WTC11 (cell line): ENCODE measurements at regions of chr20 and their contacts with region 1.

Region 1: DNA sequence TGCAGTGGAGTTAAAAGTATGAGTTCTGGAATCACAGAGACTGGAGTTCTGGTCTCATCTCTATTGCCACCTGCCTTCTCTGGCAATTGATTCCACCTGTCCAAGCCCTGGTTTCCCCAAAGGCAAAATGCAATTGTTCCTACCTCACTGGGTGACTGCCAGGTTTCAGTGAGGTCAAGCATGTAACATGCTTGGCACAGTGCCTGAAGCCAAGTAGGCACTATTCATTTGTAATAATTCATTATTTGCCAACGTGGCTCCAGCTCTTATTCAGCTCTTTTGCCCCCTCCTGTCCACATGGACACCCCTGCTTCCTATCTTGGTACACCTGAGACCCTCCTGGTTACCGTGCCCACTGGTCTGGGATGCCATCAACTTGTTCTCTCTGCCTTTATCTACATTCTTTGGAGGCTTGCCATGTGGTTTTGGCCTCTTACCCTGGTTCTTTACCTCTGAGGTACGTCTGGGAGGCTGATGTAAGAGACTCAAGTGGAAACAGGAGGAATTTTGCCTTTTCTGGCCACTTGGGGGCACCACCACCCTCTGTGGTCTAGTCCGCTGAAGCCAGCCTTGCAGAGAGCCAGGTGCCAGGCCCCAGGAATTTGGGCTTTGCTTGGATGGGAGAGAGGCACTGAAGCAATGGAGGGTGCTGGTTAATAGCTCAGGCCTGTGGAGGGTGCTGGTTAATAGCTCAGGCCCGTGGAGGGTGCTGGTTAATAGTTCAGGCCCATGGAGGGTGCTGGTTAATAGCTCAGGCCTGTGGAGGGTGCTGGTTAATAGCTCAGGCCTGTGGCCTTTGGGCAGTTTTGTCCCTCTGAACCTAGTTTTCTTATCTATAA is 1.7 kb downstream of the KCNK15 start:
- DNase-seq: peak; percentile 95
- ATAC-seq: peak; percentile 73
- H3K4me3 Mint-ChIP-seq: peak overlapping the region; percentile 75
- H3K27ac Mint-ChIP-seq: no peak overlapping the region
- H3K4me1 Mint-ChIP-seq: peaks cover 15% of the 10 kb centered on the region
- H3K27me3 Mint-ChIP-seq: peaks cover 47% of the 10 kb centered on the region
- CTCF ChIP-seq: peak; percentile 76

Region 2: GRCh38 chr20:44642203-44643153 is 104.9 kb before region 1 on chr20:
- CTCF ChIA-PET with region 1: no interaction called
- POLR2A ChIA-PET with region 1: no interaction called
- DNase-seq: peak; percentile 45
- ATAC-seq: peak; percentile 67
- H3K4me3 Mint-ChIP-seq: peak overlapping the region; percentile 0; the same call in 1 of the 2 replicates
- H3K27ac Mint-ChIP-seq: peak overlapping the region; percentile 70
- H3K4me1 Mint-ChIP-seq: peaks cover 57% of the 10 kb centered on the region
- H3K27me3 Mint-ChIP-seq: no peaks in the 10 kb centered on the region
- CTCF ChIP-seq: no peak

Region 3: DNA sequence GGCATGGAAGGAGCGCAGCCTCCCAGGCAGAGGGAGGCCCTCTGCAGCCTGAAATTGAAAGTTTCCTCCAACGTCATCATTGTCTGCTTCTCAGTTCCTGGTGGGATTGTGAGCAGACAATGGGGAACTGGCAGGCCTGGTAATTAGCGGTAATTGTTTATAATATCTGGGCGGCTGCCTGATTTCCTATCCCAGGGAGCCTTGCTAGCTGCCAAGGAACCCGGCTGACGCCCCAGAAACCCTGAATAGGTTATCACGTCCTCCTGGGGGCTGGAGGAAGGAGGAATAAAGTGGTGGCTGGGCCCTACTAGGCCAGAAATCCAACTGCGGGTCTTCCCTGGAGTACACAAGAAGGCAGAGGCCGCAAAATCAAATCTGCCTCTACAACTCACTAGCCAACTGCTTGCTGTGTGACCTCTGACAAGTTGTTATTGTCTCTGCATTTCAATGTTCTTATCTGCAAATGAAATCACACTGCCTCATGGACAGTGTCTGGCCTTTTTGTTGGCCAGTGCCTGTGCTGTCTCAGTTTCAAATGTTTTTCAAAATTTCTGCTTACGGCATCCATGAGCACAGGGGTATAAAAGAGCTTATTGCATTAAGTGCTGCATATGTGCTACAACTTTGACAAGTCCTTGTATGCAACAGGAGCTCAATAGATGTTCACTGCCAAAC is 15.2 kb after region 1 on chr20:
- CTCF ChIA-PET with region 1: interaction called, 18 read pairs
- POLR2A ChIA-PET with region 1: no interaction called
- DNase-seq: no peak
- ATAC-seq: no peak
- H3K4me3 Mint-ChIP-seq: no peak overlapping the region
- H3K27ac Mint-ChIP-seq: no peak overlapping the region
- H3K4me1 Mint-ChIP-seq: peaks cover 7% of the 10 kb centered on the region; the same call in 1 of the 2 replicates
- H3K27me3 Mint-ChIP-seq: no peaks in the 10 kb centered on the region
- CTCF ChIP-seq: no peak

Region 4: GRCh38 chr20:44776977-44777376 is 29.6 kb after region 1 on chr20:
- CTCF ChIA-PET with region 1: interaction called, 14 read pairs
- POLR2A ChIA-PET with region 1: no interaction called
- DNase-seq: peak; percentile 69
- ATAC-seq: peak; percentile 20; the same call in 1 of the 2 replicates
- H3K4me3 Mint-ChIP-seq: no peak overlapping the region
- H3K27ac Mint-ChIP-seq: no peak overlapping the region
- H3K4me1 Mint-ChIP-seq: no peaks in the 10 kb centered on the region
- H3K27me3 Mint-ChIP-seq: no peaks in the 10 kb centered on the region
- CTCF ChIP-seq: no peak

Region 5: GRCh38 chr20:44800398-44801046 is 53.1 kb after region 1 on chr20:
- CTCF ChIA-PET with region 1: interaction called, 15 read pairs
- POLR2A ChIA-PET with region 1: no interaction called
- DNase-seq: peak; percentile 63
- ATAC-seq: peak; percentile 74
- H3K4me3 Mint-ChIP-seq: no peak overlapping the region
- H3K27ac Mint-ChIP-seq: no peak overlapping the region
- H3K4me1 Mint-ChIP-seq: peaks cover 17% of the 10 kb centered on the region
- H3K27me3 Mint-ChIP-seq: no peaks in the 10 kb centered on the region
- CTCF ChIP-seq: no peak; the same call in 1 of the 2 replicates

Region 6: GRCh38 chr20:44866703-44867335 is 119.4 kb after region 1 on chr20:
- CTCF ChIA-PET with region 1: interaction called, 15 read pairs
- POLR2A ChIA-PET with region 1: no interaction called
- DNase-seq: no peak
- ATAC-seq: no peak
- H3K4me3 Mint-ChIP-seq: no peak overlapping the region
- H3K27ac Mint-ChIP-seq: no peak overlapping the region
- H3K4me1 Mint-ChIP-seq: no peaks in the 10 kb centered on the region
- H3K27me3 Mint-ChIP-seq: no peaks in the 10 kb centered on the region; the same call in 1 of the 2 replicates
- CTCF ChIP-seq: no peak

Region 7: DNA sequence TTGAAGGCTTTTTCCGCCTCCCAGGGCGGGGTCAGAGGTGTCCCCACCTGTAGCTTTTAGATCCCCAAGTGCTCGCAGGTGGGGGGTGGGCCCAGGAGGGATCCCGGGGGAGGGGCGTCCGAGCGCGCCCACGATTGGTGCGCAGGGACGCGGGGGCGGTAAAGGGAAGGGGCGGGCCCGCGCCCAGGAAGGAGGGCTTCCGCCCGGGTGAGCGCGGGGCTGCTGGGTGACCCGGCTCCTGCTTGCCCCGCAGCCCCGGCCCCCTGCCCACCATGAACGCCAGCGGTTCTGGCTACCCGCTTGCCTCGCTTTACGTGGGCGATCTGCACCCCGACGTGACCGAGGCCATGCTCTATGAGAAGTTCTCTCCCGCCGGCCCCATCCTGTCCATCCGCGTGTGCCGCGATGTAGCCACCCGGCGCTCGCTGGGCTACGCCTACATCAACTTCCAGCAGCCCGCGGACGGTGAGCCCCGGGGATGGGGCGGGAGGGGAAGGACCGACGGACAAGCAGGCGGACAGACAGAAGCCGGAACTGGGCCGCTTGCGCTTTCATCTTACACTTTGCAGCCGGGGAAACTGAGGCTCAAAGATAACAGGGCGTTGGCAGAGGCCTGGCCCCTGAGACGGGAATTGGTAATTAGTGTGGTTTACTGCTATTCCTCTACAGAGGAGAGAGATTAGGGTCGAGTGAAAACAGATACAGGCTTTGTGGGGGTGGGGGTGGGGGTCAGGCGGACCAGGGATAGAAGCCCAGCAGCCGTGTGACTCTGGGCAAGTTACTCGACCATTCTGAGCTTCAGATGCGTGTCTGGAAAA is 162.7 kb after region 1 on chr20 and contains the start of gene PABPC1L:
- CTCF ChIA-PET with region 1: interaction called, 10 read pairs
- POLR2A ChIA-PET with region 1: no interaction called
- DNase-seq: peak; percentile 90
- ATAC-seq: peak; percentile 86
- H3K4me3 Mint-ChIP-seq: peak within 1 kb of the TSS; percentile 84
- H3K27ac Mint-ChIP-seq: peak within 1 kb of the TSS; percentile 63
- H3K4me1 Mint-ChIP-seq: peaks cover 24% of the 10 kb centered on the region
- H3K27me3 Mint-ChIP-seq: no peaks in the 10 kb centered on the region
- CTCF ChIP-seq: no peak
- total RNA-seq, gene PABPC1L: 88.3 to 98.2 TPM (median 90.7 TPM) in 3 replicates